ENCODE measurements at regions of chr2 and their contacts with region 1.

Region 1: DNA sequence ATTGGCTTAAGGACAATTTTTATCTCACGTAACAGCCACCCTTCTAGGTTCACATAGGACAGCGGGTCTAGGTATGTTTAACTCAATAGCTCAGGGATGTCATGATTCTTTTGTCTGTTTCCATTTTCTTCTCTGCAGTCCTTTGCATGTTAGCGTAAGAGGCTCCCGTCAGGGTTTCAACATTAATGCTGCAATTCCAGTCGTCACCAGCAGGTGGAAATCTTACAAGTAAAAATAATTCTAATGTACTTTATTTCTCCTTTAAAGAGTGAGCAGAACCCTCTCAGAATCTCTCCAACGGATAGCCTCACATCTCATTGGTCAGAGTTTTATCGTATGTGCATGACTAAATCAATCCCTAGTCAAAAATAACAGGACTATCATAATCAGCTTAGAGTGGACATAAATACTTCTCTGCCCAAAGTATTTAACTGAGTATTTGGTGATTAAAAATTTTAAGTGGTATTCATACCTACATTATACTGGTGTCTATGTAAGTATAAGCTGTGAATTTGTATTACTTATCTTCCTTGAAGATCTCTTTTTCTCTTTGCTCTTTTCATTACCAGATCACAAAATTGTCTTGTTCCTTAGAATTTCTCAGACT is 487.2 kb upstream of the GCFC2 start:
- DNase-seq: peak; percentile 16
- H3K4me3 ChIP-seq: no peak overlapping the region
- CTCF ChIP-seq: peak; percentile 29

Region 2: DNA sequence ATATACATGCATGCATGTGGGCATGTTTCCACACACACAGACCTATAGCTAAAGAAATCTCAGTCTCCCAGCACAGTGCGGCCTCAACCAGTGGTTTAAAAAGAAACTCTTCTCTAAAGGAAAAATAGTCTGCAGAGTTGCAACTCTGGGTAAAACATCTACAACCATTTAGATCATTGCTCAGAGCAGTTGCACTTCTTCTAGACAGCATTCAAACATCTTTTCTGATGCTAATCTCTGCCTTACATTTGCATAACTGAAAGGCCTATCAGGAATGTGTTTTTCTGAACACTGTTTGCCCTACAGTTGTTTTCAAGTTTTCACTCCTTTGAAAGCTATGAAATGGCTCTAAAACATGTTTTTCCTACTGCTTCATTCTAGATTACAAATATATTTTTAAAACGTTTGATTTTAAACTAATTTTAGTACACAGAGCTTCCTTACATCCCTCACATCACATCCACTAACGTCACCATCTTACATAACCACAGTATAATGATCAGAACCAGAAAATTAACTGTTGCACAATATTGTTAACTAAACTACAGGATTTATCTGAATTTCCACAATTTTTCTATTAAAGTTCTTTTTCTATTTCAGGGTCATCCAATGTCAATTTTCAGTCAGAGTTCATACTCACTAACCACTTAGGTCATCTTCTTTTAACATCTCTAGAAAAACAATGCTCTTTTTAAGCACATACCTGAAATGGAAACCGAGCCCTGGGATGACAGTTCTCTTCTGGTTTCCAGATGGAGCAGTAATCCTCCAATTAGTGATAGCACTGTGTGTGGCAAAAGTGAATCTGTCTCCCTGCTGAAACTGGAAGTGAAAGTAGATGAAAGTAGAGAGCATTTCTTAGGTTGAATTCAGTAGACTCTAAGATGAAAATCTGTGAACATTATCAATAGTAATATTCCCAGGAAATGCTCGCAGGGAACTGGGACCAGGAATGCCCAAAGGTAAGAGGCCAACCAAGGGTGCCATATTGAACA is 14.3 kb after region 1 on chr2:
- CTCF ChIA-PET with region 1: interaction called, 12 read pairs
- POLR2A ChIA-PET with region 1: no interaction called
- DNase-seq: no peak
- H3K4me3 ChIP-seq: no peak overlapping the region
- CTCF ChIP-seq: no peak